Panc1 (cell line): ENCODE measurements at regions of chr7 and their contacts with region 1.

Region 1: GRCh38 chr7:101077303-101078089 is 7.8 kb upstream of the TRIM56 start:
- DNase-seq: no peak
- ATAC-seq: peak; percentile 99
- H3K4me3 ChIP-seq: no peak overlapping the region
- H3K27ac ChIP-seq: no peak overlapping the region; the same call in 1 of the 2 replicates
- H3K4me1 ChIP-seq: peaks cover 3% of the 10 kb centered on the region; the same call in 1 of the 2 replicates
- H3K27me3 ChIP-seq: no peaks in the 10 kb centered on the region
- CTCF ChIP-seq: peak; percentile 97

Region 2: DNA sequence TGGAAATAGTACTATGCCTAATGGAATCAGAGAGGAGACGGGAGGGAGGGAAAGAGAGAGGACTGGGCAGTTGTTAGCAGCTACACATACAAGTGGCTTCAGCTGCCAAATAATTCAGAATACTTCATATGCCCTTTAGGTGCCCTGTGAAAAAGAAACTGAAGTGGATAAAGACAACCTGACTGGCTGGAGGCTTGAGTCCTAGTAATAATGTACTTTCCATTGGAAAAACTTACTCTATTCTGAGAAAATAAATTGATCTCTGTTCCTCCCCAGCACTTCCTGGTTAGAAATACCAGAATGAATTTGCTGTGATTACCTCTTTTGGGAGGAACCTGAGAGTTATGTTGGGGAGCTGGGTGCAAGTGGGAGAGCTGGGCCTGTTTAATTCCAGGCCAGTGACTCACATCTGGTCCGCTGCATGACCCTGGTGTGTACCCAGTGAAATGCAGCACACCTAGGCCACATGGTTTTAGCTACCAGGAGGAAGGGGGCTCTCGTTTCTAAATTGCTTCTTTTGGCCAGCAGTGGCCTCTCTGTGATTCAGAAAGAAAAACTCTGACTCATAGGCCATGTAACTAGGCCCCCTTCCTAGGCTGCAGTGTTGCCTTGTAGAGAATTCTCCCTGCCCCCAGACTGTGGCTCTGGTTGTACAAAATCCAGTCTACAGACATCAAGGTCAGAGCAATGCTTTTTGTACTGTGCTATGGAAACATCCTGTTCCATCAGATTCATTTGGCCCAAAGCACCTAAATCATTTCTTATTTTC is 532.0 kb before region 1 on chr7:
- CTCF ChIA-PET with region 1: interaction called, 17 read pairs
- POLR2A ChIA-PET with region 1: no interaction called
- in situ Hi-C with region 1: no loop called
- intact Hi-C with region 1: no loop called
- DNase-seq: peak; percentile 88
- ATAC-seq: peak; percentile 92
- H3K4me3 ChIP-seq: peak overlapping the region in 1 of 2 experiments; percentile 34; a peak in 2 of 4 replicates
- H3K27ac ChIP-seq: peak overlapping the region; percentile 98
- H3K4me1 ChIP-seq: peaks cover 58% of the 10 kb centered on the region
- H3K27me3 ChIP-seq: no peaks in the 10 kb centered on the region
- CTCF ChIP-seq: no peak

Region 3: DNA sequence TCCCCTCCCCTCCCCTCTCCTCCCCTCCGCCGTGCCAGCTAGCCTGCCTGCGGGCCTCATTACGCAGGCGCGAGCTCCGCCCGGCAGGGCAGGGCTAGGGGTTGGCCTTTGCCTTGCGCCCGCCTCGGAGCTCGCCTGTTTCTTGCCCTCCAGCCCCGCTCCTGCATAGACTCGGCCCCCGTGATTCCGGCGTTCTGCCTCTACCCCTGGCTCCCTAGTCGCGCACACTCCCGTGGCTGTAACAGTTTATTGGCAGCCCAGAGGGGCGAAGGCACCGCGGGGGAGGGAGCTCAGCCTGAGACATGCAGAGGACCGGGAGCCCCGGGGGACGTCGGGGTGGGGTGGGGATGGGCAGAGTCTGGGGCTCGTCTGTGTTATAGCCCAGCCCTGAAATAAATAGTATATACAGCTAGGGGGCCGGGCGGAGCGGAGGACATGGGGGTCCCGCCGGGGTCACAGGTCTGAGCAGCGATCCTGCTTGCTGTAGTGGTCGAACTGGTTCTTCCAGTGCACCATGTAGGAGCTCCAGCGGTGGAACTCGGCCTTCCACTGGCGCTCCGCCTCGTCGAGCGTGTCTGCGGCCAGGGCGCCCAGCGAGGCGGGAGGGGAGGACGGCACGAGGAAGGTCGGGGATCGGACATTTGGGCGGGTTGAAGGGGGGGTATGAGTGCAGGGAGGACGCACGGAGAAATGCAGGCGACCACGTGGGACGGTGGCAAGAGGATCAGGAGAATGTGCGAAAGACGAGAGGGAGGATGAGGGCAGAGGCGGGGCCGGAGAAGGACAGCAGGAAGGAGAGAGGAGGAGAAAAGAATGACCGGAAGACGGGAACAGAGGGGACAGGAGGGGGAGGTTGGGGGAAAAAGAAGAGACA is 187.5 kb before region 1 on chr7:
- CTCF ChIA-PET with region 1: no interaction called
- POLR2A ChIA-PET with region 1: no interaction called
- in situ Hi-C with region 1: no loop called
- intact Hi-C with region 1: loop called (anchors 5 kb)
- DNase-seq: no peak
- ATAC-seq: peak; percentile 87
- H3K4me3 ChIP-seq: peak overlapping the region; percentile 62 to 72
- H3K27ac ChIP-seq: peak overlapping the region; percentile 87
- H3K4me1 ChIP-seq: peaks cover 42% of the 10 kb centered on the region
- H3K27me3 ChIP-seq: no peaks in the 10 kb centered on the region
- CTCF ChIP-seq: no peak

Region 4: DNA sequence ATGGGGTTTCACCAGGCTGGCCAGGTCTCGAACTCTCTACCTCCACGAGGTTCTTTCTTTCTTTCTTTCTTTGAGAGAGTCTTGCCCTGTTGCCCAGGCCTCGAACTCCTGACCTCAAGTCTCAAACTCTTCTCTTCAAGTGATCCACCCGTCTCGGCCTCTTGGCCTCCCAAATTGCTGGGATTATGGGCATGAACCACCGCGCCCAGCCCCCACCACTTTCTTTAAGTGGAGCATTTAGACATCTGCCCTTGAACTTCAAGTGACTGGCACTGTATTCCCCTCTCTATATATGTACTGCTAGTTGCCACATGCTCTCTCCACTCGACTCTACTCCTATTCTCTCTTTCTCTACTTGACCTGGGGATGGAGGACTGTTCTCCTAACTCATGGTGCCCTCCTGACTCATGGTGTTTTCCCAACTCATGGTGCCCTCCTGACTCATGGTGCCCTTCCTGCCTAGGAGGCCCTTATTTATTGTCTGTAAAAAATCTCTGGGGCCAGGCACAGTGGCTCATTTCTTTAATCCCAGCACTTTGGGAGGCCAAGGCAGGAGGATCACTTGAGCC is 162.5 kb before region 1 on chr7:
- CTCF ChIA-PET with region 1: interaction called, 10 read pairs
- POLR2A ChIA-PET with region 1: no interaction called
- in situ Hi-C with region 1: no loop called
- intact Hi-C with region 1: no loop called
- DNase-seq: no peak
- ATAC-seq: peak; percentile 70; the same call in 1 of the 2 replicates
- H3K4me3 ChIP-seq: no peak overlapping the region
- H3K27ac ChIP-seq: no peak overlapping the region
- H3K4me1 ChIP-seq: no peaks in the 10 kb centered on the region
- H3K27me3 ChIP-seq: no peaks in the 10 kb centered on the region
- CTCF ChIP-seq: no peak

Region 5: GRCh38 chr7:100965723-100966541 is 111.6 kb before region 1 on chr7:
- CTCF ChIA-PET with region 1: interaction called, 10 read pairs
- POLR2A ChIA-PET with region 1: no interaction called
- in situ Hi-C with region 1: no loop called
- intact Hi-C with region 1: no loop called
- DNase-seq: no peak
- ATAC-seq: peak; percentile 92
- H3K4me3 ChIP-seq: peak overlapping the region; percentile 40 to 53
- H3K27ac ChIP-seq: no peak overlapping the region
- H3K4me1 ChIP-seq: peaks cover 13% of the 10 kb centered on the region
- H3K27me3 ChIP-seq: peaks cover 5% of the 10 kb centered on the region
- CTCF ChIP-seq: peak; percentile 99